Kidney (tissue), 22 donors: ENCODE measurements at regions of chr6 and their contacts with region 1.

Region 1: DNA sequence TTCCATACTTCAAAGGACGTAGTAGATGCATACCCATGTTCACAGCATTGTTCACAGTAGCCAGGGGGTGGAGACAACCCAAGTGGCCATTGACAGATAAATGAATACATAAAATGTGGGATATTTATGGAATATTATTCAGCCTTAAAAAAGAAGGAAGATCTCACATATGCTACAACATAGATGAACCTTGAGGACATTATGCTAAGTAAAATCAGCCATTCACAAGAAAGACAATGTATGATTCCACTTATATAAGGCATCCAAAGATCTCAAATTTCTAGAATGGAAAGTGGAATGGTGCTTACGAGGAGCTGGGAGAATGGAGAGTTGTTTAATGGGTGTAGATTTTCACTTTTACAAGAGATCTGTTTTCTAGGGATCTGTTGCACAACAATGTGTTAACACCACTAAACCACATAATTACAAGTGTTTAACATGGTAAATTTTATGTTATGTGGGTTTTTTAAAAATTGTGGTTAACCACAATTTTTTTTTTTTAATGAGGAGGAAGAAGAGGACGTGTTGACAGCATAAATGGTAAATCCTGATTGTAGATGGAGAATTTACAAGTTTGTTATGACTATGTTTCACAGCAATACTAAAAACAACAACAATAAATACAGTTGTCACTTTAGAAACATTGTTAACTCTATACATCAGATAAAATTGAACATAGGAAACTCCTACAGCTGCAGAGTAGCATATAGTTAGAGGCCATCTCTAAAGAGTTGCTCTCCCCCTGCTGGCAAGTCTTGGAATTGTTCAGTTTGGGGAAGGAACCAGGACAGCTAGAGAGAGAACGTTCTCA is 41.6 kb downstream of the CCN2 start:
- DNase-seq: peak in 4 of 5 donors; percentile 68 to 91 (median 78)
- H3K4me3 ChIP-seq: no peak overlapping the region
- H3K27ac ChIP-seq: no peak overlapping the region
- H3K4me1 ChIP-seq: no peaks in the 10 kb centered on the region
- H3K27me3 ChIP-seq: no peaks in the 10 kb centered on the region
- CTCF ChIP-seq: peak; percentile 85

Region 2: GRCh38 chr6:131694831-131695426 is 214.7 kb before region 1 on chr6:
- intact Hi-C with region 1: loop called (anchors 10 kb)
- DNase-seq: peak in 4 of 5 donors; percentile 48 to 84 (median 68)
- H3K4me3 ChIP-seq: no peak overlapping the region
- H3K27ac ChIP-seq: no peak overlapping the region
- H3K4me1 ChIP-seq: no peaks in the 10 kb centered on the region
- H3K27me3 ChIP-seq: no peaks in the 10 kb centered on the region
- CTCF ChIP-seq: peak; percentile 48

Region 3: GRCh38 chr6:132246632-132247270 is 337.1 kb after region 1 on chr6:
- intact Hi-C with region 1: no loop called
- DNase-seq: peak in 1 of 5 donors; percentile 52
- H3K4me3 ChIP-seq: no peak overlapping the region
- H3K27ac ChIP-seq: no peak overlapping the region
- H3K4me1 ChIP-seq: no peaks in the 10 kb centered on the region
- H3K27me3 ChIP-seq: no peaks in the 10 kb centered on the region
- CTCF ChIP-seq: no peak